ENCODE measurements at regions of chr15 and their contacts with region 1.

Region 1: GRCh38 chr15:94287794-94288246 is 56.5 kb downstream of the MCTP2 start:
- DNase-seq: peak; percentile 93
- H3K4me3 ChIP-seq: peak overlapping the region; percentile 60
- H3K27ac ChIP-seq: peak overlapping the region; percentile 96
- H3K4me1 ChIP-seq: peaks cover 63% of the 10 kb centered on the region
- CTCF ChIP-seq: peak; percentile 57; the same call in 1 of the 2 replicates

Region 2: GRCh38 chr15:94238539-94239118 is 49.2 kb before region 1 on chr15:
- CTCF ChIA-PET with region 1: no interaction called
- POLR2A ChIA-PET with region 1: interaction called, 79 read pairs
- intact Hi-C with region 1: no loop called
- DNase-seq: peak; percentile 84
- H3K4me3 ChIP-seq: peak overlapping the region; percentile 12
- H3K27ac ChIP-seq: peak overlapping the region; percentile 73
- H3K4me1 ChIP-seq: peaks cover 82% of the 10 kb centered on the region
- CTCF ChIP-seq: no peak

Region 3: GRCh38 chr15:94258246-94258645 is 29.6 kb before region 1 on chr15:
- CTCF ChIA-PET with region 1: interaction called, 6 read pairs
- POLR2A ChIA-PET with region 1: interaction called, 65 read pairs
- intact Hi-C with region 1: loop called (anchors 1 kb)
- DNase-seq: peak; percentile 91
- H3K4me3 ChIP-seq: peak overlapping the region; percentile 43
- H3K27ac ChIP-seq: peak overlapping the region; percentile 97
- H3K4me1 ChIP-seq: peaks cover 98% of the 10 kb centered on the region
- CTCF ChIP-seq: no peak

Region 4: DNA sequence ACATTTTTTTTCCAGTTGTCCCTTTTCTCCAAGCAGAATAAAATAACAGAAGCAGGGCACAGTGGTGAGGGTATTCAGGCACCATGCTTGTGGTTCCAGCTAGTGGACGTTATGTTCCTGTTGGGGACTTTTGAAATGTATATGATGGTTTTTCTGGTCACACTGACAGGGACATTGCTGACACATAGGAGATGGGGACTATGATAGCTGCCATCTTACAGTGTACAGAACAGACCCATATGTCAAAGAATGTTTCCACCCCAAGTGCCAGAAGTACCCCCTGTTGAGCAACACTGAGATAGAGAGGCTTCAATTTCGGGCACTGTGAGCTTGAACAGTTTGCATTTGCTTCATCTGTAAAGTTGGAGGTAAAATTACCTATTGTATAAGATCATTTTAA is 17.9 kb before region 1 on chr15:
- CTCF ChIA-PET with region 1: no interaction called
- POLR2A ChIA-PET with region 1: interaction called, 65 read pairs
- intact Hi-C with region 1: no loop called
- DNase-seq: no peak
- H3K4me3 ChIP-seq: no peak overlapping the region
- H3K27ac ChIP-seq: no peak overlapping the region
- H3K4me1 ChIP-seq: peaks cover 77% of the 10 kb centered on the region
- CTCF ChIP-seq: no peak

Region 5: DNA sequence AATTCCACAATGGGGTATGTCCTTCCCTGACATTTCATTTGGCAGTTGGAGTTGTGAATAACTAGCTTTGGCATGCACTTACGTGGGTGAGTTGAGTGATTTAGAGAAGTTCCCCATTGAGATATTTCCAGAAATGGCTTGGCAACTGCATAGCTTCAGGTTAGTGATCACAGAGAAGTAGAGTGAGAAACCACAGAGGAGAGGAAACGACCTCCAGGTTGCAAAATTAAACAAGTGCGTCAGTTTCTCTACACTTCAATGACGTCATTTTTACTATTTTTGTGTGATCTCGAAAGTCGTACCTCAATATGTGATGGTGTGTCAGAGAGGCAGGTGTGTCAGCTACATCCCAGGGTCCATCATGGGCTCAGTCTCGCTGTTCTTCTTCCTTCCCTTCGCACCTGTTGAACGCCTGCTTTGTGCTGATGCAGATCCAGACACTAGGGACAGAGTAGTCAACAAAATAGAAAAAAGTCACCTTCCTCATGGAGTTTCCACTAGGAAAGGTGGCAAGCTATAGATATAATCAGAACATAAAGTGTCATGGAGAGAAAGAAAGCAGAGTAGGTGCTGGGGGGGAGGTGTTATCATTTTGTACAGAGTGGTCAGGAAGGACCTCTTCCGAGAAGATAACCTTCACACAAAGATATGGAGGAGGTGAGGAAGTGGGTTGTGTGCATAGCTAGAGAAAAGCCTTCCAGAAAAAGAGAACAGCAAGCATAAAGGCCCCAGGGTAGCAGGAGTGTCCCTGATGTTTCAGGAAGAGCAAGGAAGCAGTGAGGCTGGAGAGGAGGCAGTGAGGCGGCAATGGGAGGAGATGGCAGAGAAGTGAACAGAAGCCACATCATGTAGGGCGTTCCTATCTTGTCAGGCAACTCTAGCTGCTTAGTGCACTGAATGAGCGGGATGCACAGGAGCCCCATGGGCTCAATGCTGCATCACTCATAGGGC is 19.2 kb after region 1 on chr15:
- CTCF ChIA-PET with region 1: interaction called, 4 read pairs
- POLR2A ChIA-PET with region 1: interaction called, 83 read pairs
- intact Hi-C with region 1: loop called (anchors 2 kb)
- DNase-seq: peak; percentile 91
- H3K4me3 ChIP-seq: peak overlapping the region; percentile 28
- H3K27ac ChIP-seq: peak overlapping the region; percentile 86
- H3K4me1 ChIP-seq: peaks cover 62% of the 10 kb centered on the region
- CTCF ChIP-seq: no peak; the same call in 1 of the 2 replicates